Endothelial cell of umbilical vein (primary cell): ENCODE measurements at regions of chr17 and their contacts with region 1.

Region 1: DNA sequence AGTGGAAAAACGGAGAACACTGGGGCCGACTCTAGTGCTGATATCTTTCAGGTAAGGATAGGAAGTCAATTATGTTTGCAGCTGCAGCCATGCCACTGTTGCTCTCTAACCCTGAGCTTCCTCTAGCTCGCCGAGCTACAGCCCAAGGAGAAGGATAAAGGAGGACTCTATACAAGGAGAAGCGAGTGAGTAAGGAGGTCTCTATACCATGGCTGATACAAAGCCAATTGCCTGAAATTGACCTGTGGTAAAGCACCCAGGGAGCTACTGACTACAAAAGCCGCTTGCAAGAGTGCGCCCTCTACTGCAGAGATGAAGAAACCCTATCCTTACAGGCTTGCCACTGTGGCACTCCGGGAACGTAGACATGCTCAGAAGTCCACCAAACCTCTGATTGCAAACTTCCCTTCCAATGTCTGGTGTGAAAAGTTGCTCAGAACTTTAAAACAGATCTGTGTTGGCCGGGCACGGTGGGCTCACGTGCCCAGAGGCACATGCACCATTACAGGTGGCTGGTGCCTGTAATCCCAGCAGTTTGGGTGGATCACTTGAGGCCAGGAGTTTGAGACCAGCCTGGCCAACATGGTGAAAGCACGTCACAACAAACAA is 10.8 kb upstream of the SLC46A1 start:
- DNase-seq: peak; percentile 61
- H3K4me3 ChIP-seq: no peak overlapping the region
- H3K27ac ChIP-seq: no peak overlapping the region
- H3K4me1 ChIP-seq: no peaks in the 10 kb centered on the region
- H3K27me3 ChIP-seq: peaks cover 9 to 19% of the 10 kb centered on the region in 2 experiments
- CTCF ChIP-seq: peak; percentile 76 to 85
- POLR2A ChIP-seq: no peak

Region 2: GRCh38 chr17:28112220-28113005 is 304.4 kb before region 1 on chr17:
- CTCF ChIA-PET with region 1: no interaction called
- POLR2A ChIA-PET with region 1: no interaction called
- dilution Hi-C with region 1: no loop called
- intact Hi-C with region 1: no loop called
- DNase-seq: peak; percentile 62
- H3K4me3 ChIP-seq: no peak overlapping the region
- H3K27ac ChIP-seq: peak overlapping the region; percentile 13
- H3K4me1 ChIP-seq: peaks cover 21% of the 10 kb centered on the region
- H3K27me3 ChIP-seq: no peaks in the 10 kb centered on the region
- CTCF ChIP-seq: no peak
- POLR2A ChIP-seq: no peak

Region 3: DNA sequence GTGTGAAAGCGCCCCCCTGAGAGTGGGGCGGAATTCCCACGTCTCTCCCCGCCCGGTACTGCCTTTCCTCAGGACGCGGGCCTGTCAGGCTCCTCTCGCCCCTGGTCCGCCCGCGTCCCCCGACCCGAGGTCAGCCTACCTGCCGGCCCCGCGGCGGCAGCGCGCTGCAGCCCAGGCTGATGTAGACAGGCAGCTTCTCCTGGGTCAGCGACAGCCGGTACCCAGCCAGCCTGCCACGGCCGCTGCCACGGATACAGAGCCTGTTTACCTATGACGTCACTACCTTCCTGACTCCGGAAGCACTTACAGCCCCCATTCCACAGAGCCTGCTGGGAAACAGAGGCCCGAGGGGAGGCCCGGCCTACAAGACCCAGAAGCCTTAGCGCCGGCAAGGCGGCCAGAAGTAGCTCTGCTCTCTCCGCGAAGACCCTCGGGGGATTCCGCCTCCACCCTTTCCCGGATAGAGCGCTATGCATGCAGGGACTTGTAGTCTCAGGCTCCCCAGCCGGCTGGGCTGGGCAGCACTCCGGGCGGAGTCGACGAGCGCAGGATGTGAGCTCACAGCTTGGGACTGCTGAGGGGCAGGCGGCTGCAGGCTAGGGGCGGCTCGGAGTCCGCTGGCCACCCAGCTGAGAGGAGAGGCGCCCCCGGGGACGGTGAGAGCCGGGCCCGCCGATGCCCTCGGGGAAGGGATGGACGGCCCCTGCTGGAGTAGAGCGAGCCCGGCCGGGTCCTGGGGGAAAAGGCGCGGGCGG is 81.4 kb before region 1 on chr17 and contains the starts of genes IFT20 and TNFAIP1:
- CTCF ChIA-PET with region 1: interaction called, 11 read pairs
- POLR2A ChIA-PET with region 1: no interaction called
- dilution Hi-C with region 1: no loop called
- intact Hi-C with region 1: no loop called
- DNase-seq: peak; percentile 100
- H3K4me3 ChIP-seq: peak within 1 kb of the TSS; percentile 75 to 98 (median 88)
- H3K27ac ChIP-seq: peak within 1 kb of the TSS; percentile 86
- H3K4me1 ChIP-seq: peaks cover 40% of the 10 kb centered on the region
- H3K27me3 ChIP-seq: no peaks in the 10 kb centered on the region
- CTCF ChIP-seq: no peak
- POLR2A ChIP-seq: peak; percentile 80
- total RNA-seq, gene IFT20: 36.3 and 45.0 TPM in 2 replicates
- total RNA-seq, gene TNFAIP1: 79.5 and 89.6 TPM in 2 replicates

Region 4: GRCh38 chr17:28357061-28357900 is 59.5 kb before region 1 on chr17 and contains the start of gene POLDIP2:
- CTCF ChIA-PET with region 1: interaction called, 7 read pairs
- POLR2A ChIA-PET with region 1: no interaction called
- dilution Hi-C with region 1: no loop called
- intact Hi-C with region 1: loop called (anchors 1 kb)
- DNase-seq: peak; percentile 95
- H3K4me3 ChIP-seq: peak within 1 kb of the TSS; percentile 89 to 98 (median 91)
- H3K27ac ChIP-seq: peak within 1 kb of the TSS; percentile 92
- H3K4me1 ChIP-seq: peaks cover 17% of the 10 kb centered on the region
- H3K27me3 ChIP-seq: no peaks in the 10 kb centered on the region
- CTCF ChIP-seq: no peak
- POLR2A ChIP-seq: peak; percentile 96
- total RNA-seq, gene POLDIP2: 81.0 and 85.2 TPM in 2 replicates

Region 5: GRCh38 chr17:28384281-28385036 is 32.3 kb before region 1 on chr17:
- CTCF ChIA-PET with region 1: interaction called, 28 read pairs
- POLR2A ChIA-PET with region 1: no interaction called
- dilution Hi-C with region 1: no loop called
- intact Hi-C with region 1: loop called (anchors 2 kb)
- DNase-seq: peak; percentile 25
- H3K4me3 ChIP-seq: peak overlapping the region in 2 of 3 experiments; percentile 12 to 38
- H3K27ac ChIP-seq: no peak overlapping the region
- H3K4me1 ChIP-seq: peaks cover 14% of the 10 kb centered on the region
- H3K27me3 ChIP-seq: peaks cover 15 to 17% of the 10 kb centered on the region in 2 experiments
- CTCF ChIP-seq: no peak
- POLR2A ChIP-seq: no peak

Region 6: DNA sequence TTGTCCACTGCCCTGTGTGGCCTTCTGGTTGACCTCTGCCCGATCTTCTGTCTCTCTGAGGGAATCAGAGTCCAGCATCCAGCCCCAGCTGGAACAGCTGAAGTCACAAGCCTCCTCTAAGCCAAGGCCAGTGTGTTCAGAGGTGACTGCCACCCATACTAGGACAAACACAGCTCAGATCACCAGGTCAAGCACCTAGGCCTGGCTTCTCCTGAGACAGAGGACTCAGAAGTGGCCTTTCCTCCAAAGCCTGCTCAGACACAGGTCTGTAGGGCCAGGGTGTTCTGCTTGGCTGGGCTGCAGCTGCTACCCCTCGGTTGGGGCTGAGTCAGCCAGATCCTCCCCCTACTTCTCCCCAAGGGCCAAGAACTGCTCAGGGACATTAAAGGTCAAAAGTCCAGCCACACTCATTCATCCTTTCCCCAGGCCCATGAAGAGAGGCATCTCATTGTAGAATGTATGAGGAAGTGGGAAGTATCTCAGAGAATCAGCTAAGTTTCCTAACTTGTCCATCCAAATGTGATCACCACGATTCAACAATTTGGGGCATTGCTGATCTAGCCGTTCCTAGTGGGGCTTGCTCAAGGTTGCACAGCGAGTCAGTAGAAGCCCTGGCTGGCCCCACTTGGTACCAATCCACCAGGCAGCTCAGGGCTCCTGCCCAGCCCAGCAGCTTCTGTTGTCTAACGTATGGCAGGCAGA is 18.4 kb before region 1 on chr17:
- CTCF ChIA-PET with region 1: interaction called, 15 read pairs
- POLR2A ChIA-PET with region 1: no interaction called
- dilution Hi-C with region 1: no loop called
- intact Hi-C with region 1: no loop called
- DNase-seq: no peak
- H3K4me3 ChIP-seq: no peak overlapping the region
- H3K27ac ChIP-seq: no peak overlapping the region
- H3K4me1 ChIP-seq: peaks cover 10% of the 10 kb centered on the region
- H3K27me3 ChIP-seq: no peaks in the 10 kb centered on the region
- CTCF ChIP-seq: no peak
- POLR2A ChIP-seq: no peak

Region 7: GRCh38 chr17:28433721-28434120 is 16.9 kb after region 1 on chr17:
- CTCF ChIA-PET with region 1: interaction called, 13 read pairs
- POLR2A ChIA-PET with region 1: no interaction called
- dilution Hi-C with region 1: no loop called
- intact Hi-C with region 1: no loop called
- DNase-seq: no peak
- H3K4me3 ChIP-seq: no peak overlapping the region
- H3K27ac ChIP-seq: no peak overlapping the region
- H3K4me1 ChIP-seq: no peaks in the 10 kb centered on the region
- H3K27me3 ChIP-seq: peaks cover 3 to 6% of the 10 kb centered on the region in 2 experiments
- CTCF ChIP-seq: no peak
- POLR2A ChIP-seq: no peak